ENCODE measurements at regions of chr6 and their contacts with region 1.

Region 1: GRCh38 chr6:42569102-42570028 is 5.5 kb downstream of the UBR2 start:
- DNase-seq: no peak
- H3K4me3 Mint-ChIP-seq: peak overlapping the region; percentile 32
- H3K27ac Mint-ChIP-seq: peak overlapping the region; percentile 90
- H3K4me1 Mint-ChIP-seq: peaks cover 43% of the 10 kb centered on the region
- H3K27me3 Mint-ChIP-seq: no peaks in the 10 kb centered on the region

Region 2: GRCh38 chr6:42637681-42638080 is 68.3 kb after region 1 on chr6:
- intact Hi-C with region 1: loop called (anchors 1 kb)
- DNase-seq: no peak
- H3K4me3 Mint-ChIP-seq: no peak overlapping the region
- H3K27ac Mint-ChIP-seq: peak overlapping the region; percentile 7
- H3K4me1 Mint-ChIP-seq: peaks cover 12% of the 10 kb centered on the region
- H3K27me3 Mint-ChIP-seq: no peaks in the 10 kb centered on the region

Region 3: GRCh38 chr6:42771741-42772100 is 202.4 kb after region 1 on chr6:
- intact Hi-C with region 1: loop called (anchors 5 kb)
- DNase-seq: peak; percentile 77
- H3K4me3 Mint-ChIP-seq: peak overlapping the region; percentile 83
- H3K27ac Mint-ChIP-seq: peak overlapping the region; percentile 99
- H3K4me1 Mint-ChIP-seq: peaks cover 55% of the 10 kb centered on the region
- H3K27me3 Mint-ChIP-seq: no peaks in the 10 kb centered on the region

Measured in activated CD4-positive, alpha-beta T cell treated with anti-CD3 and anti-CD28 coated beads, Interleukin-2, amount 10 ng/mL, durations not matched to agents 24 days and 14 days (primary cell).